CD14-positive monocyte (primary cell): ENCODE measurements at regions of chr12 and their contacts with region 1.

Region 1: GRCh38 chr12:50504798-50505385 is at the start of gene DIP2B:
- DNase-seq: peak; percentile 91 to 95 (median 94)
- H3K4me3 ChIP-seq: peak within 1 kb of the TSS; percentile 70 to 95 (median 93)
- H3K4me3 Mint-ChIP-seq: peak within 1 kb of the TSS; percentile 91 to 97
- H3K27ac ChIP-seq: peak within 1 kb of the TSS; percentile 82 to 92
- H3K27ac Mint-ChIP-seq: peak within 1 kb of the TSS; percentile 89 to 96 (median 93)
- H3K4me1 ChIP-seq: peaks cover 43 to 45% of the 10 kb centered on the region in 2 donors
- H3K4me1 Mint-ChIP-seq: peaks cover 44% of the 10 kb centered on the region
- H3K27me3 ChIP-seq: no peaks in the 10 kb centered on the region
- H3K27me3 Mint-ChIP-seq: no peaks in the 10 kb centered on the region
- CTCF ChIP-seq: peak; percentile 90
- polyA plus RNA-seq, gene DIP2B: 3.5 to 12.3 (median 6.5) TPM

Region 2: DNA sequence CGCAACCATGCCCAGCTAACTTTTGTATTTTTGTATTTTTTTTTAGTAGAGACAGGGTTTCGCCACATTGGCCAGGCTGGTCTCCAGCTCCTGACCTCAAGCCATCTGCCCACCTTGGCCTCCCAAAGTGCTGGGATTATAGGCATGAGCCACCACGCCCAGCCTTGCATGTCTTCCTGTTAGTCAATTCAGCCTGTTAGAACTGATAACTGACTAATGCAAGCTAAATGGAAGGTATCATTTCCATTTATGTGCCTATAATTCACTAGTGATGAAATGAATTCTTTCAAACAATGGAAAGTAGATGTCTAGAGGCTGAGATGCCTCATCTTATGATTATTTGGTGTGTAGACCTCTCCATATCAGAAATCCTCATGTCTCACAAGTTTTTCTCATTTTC is 37.5 kb before region 1 on chr12:
- intact Hi-C with region 1: no loop called
- DNase-seq: no peak
- H3K4me3 ChIP-seq: no peak overlapping the region
- H3K4me3 Mint-ChIP-seq: no peak overlapping the region
- H3K27ac ChIP-seq: no peak overlapping the region
- H3K27ac Mint-ChIP-seq: peak overlapping the region in 1 of 7 donors; percentile 16
- H3K4me1 ChIP-seq: no peaks in the 10 kb centered on the region
- H3K4me1 Mint-ChIP-seq: no peaks in the 10 kb centered on the region
- H3K27me3 ChIP-seq: no peaks in the 10 kb centered on the region
- H3K27me3 Mint-ChIP-seq: no peaks in the 10 kb centered on the region
- CTCF ChIP-seq: no peak

Region 3: DNA sequence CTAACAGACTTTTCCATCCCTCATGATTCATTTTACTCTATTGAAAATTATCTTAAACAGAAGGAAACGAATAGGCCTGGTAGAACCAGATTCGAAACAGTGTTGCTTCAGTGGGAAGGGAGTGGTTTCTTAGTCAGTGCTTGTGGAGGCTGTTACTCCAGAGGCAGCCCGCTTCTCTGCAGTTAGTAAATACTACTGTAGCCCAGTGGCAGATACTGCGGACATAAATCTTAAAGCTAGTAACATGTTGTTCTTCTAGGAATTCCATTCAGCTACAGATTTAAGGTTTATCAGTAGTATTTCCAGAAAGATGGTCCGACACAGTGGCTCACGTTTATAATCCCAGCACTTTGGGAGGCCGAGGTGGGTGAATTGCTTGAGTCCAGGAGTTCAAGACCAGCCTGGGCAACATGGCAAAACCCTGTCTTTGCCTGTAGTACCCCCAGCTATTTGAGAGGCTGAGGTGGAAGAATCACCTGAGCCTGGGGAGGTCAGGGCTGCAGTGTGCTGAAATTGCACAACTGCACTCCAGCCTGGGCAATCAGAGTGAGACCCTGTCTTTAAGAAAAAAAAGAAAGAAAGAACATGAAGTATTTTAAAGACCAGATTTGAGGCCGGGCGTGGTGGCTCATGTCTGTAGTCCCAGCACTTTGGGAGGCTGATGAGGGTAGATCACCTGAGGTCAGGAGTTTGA is 45.8 kb after region 1 on chr12:
- intact Hi-C with region 1: loop called in 1 of 2 experiments (anchors 5 kb)
- DNase-seq: peak in 2 of 3 donors; percentile 13 to 46
- H3K4me3 ChIP-seq: no peak overlapping the region
- H3K4me3 Mint-ChIP-seq: no peak overlapping the region
- H3K27ac ChIP-seq: peak overlapping the region in 1 of 2 donors; percentile 39
- H3K27ac Mint-ChIP-seq: peak overlapping the region in 5 of 7 donors; percentile 3 to 79 (median 40)
- H3K4me1 ChIP-seq: peaks cover 12 to 24% of the 10 kb centered on the region in 2 donors
- H3K4me1 Mint-ChIP-seq: peaks cover 41% of the 10 kb centered on the region
- H3K27me3 ChIP-seq: no peaks in the 10 kb centered on the region
- H3K27me3 Mint-ChIP-seq: no peaks in the 10 kb centered on the region
- CTCF ChIP-seq: no peak

Region 4: GRCh38 chr12:50637870-50638481 is 133.1 kb after region 1 on chr12:
- intact Hi-C with region 1: loop called (anchors 2 kb)
- DNase-seq: peak; percentile 23 to 68 (median 46)
- H3K4me3 ChIP-seq: no peak overlapping the region
- H3K4me3 Mint-ChIP-seq: no peak overlapping the region
- H3K27ac ChIP-seq: peak overlapping the region in 1 of 2 donors; percentile 49
- H3K27ac Mint-ChIP-seq: peak overlapping the region in 1 of 7 donors; percentile 52
- H3K4me1 ChIP-seq: peaks cover 18 to 19% of the 10 kb centered on the region in 2 donors
- H3K4me1 Mint-ChIP-seq: peaks cover 45% of the 10 kb centered on the region
- H3K27me3 ChIP-seq: no peaks in the 10 kb centered on the region
- H3K27me3 Mint-ChIP-seq: peaks cover 0 to 2% (median 0%) of the 10 kb centered on the region in 3 donors
- CTCF ChIP-seq: peak; percentile 80